HCT116 (cell line): ENCODE measurements at regions of chr12 and their contacts with region 1.

Region 1: DNA sequence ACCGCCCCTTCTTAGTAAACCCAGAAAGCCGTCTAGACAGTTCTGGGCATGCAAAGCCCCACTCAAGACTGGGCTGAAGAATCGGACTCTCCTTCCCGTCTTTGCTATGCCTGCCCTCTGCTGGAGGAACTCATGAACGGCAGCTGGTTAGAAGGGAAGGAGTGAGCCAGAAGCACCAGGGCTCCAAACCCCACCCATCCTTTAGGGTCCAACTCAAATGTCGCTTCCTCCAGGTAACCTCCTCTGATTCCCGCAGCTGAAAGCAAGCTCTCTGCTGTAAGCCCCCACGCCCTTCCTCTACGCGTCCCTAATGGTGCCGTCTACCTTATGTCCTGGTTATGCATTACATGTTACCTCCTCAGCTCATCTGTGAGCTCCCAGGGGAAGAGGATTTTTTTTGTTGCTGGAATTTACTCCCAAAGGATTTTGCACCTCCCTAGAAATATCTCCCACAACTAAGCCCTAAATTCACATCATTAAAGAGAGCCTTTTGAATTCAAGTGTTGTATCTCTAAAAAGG is 59.0 kb upstream of the SCN8A start:
- DNase-seq: peak; percentile 67
- ATAC-seq: peak; percentile 98
- H3K4me3 ChIP-seq: no peak overlapping the region
- H3K27ac ChIP-seq: no peak overlapping the region
- H3K4me1 ChIP-seq: peaks cover 0 to 12% of the 10 kb centered on the region in 2 experiments; a peak in 2 of 4 replicates
- H3K27me3 ChIP-seq: peaks cover 5% of the 10 kb centered on the region; the same call in 1 of the 2 replicates
- CTCF ChIP-seq: peak; percentile 81 to 88 (median 85)
- POLR2A ChIP-seq: no peak
- RAD21 ChIP-seq: peak; percentile 91

Region 2: GRCh38 chr12:51419425-51420208 is 112.4 kb before region 1 on chr12:
- CTCF ChIA-PET with region 1: interaction called, 30 read pairs
- POLR2A ChIA-PET with region 1: no interaction called
- RAD21 ChIA-PET with region 1: interaction called, 4 read pairs
- intact Hi-C with region 1: loop called (anchors 1 kb)
- DNase-seq: no peak
- ATAC-seq: peak; percentile 38; the same call in 1 of the 2 replicates
- H3K4me3 ChIP-seq: no peak overlapping the region
- H3K27ac ChIP-seq: no peak overlapping the region
- H3K4me1 ChIP-seq: peaks cover 0 to 4% of the 10 kb centered on the region in 2 experiments; a peak in 2 of 4 replicates
- H3K27me3 ChIP-seq: no peaks in the 10 kb centered on the region; the same call in 1 of the 2 replicates
- CTCF ChIP-seq: peak in 1 of 3 experiments; percentile 8; a peak in 1 of 6 replicates
- POLR2A ChIP-seq: no peak
- RAD21 ChIP-seq: 0 out of 2 replicates have a peak, but pooled peaks have one; percentile 20

Region 3: DNA sequence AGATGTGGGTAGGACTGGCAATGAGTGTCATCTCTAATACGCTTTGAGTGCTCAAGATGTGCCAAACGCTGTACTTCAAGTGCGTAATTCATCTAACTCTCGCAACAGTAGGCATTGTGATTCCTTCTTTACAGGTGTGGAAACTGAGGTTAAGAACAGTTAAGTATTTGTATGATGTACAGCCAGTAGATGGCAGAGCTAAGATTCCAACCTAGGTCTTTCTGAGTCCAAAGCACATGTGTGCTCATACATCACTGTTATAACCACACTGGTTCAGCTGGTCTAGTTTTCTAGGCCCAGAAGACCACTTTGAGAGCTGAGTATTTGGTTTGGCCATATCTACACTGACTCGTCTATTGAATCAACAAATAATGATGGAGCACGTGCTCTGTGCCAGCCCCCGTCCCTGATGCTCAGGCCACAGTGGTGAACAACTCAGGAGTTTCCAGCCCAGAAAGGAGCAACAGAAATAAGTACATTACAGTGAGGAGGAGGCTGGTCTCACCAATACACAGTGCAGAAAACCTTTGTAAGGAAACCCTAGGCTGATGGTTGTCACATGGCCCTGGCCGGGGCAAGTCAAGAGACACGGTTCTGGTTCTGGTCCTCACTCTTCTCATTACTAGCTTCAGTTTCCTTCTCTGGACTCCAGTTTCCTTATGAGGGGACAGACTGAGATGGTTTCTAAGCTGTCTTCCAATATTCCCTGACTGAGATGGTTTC is 10.3 kb before region 1 on chr12:
- CTCF ChIA-PET with region 1: interaction called, 29 read pairs
- POLR2A ChIA-PET with region 1: no interaction called
- RAD21 ChIA-PET with region 1: no interaction called
- intact Hi-C with region 1: no loop called
- DNase-seq: no peak
- ATAC-seq: peak; percentile 71
- H3K4me3 ChIP-seq: no peak overlapping the region
- H3K27ac ChIP-seq: no peak overlapping the region
- H3K4me1 ChIP-seq: no peaks in the 10 kb centered on the region
- H3K27me3 ChIP-seq: no peaks in the 10 kb centered on the region
- CTCF ChIP-seq: peak; percentile 24 to 39 (median 25); a peak in 4 of 6 replicates
- POLR2A ChIP-seq: no peak
- RAD21 ChIP-seq: peak; percentile 42

Region 4: DNA sequence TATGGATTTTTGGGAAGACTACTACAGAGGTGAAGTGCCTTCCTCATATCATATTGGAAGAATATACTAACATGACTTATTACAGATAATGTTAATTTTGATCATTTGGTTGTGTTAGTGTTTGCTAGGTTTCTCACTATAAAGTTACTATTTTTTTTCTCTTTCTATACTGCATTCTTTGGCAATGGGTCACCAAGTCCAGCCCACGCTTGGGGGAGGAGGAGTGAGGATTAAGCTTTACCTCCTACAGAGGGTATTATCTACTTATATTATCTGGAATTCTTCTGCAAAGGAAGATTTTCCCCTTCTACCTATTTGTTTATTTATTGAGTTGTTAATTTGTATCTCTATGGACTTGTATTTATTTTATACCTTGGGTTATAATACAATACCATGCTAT is 90.5 kb after region 1 on chr12:
- CTCF ChIA-PET with region 1: no interaction called
- POLR2A ChIA-PET with region 1: no interaction called
- RAD21 ChIA-PET with region 1: no interaction called
- intact Hi-C with region 1: no loop called
- DNase-seq: no peak
- ATAC-seq: no peak
- H3K4me3 ChIP-seq: no peak overlapping the region; a peak in 1 of 4 replicates
- H3K27ac ChIP-seq: no peak overlapping the region
- H3K4me1 ChIP-seq: peaks cover 5 to 11% of the 10 kb centered on the region in 2 experiments; a peak in 3 of 4 replicates
- H3K27me3 ChIP-seq: no peaks in the 10 kb centered on the region
- CTCF ChIP-seq: no peak
- POLR2A ChIP-seq: no peak
- RAD21 ChIP-seq: no peak

Region 5: DNA sequence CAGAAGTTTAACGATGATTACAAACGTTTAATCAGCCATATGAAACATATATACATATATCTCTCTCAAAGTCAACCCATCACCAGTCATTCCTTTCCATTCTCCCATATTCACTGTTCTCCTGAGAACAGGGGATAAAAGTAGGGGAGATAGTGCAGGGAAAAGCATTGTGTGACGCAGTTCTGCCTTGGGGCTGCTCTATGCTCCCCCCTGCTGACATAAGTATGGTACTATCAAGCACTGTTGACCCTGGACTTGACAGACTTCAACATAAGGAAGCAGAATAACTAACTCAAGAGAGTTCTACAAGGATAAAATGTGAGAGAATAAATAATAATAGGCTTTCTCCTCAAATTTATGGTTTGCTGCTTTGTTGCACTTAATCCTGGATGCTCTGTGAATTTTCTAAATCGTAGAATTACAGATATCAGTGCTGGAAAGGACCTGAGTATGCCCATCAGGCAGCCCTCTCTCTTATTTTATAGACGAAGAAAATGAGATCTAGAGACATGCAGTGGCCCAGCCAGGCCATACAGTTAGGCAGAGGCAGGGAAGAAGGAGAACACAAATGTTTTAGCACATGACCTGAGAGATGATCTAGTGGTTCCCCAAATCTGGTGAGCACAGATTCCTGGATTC is 146.2 kb after region 1 on chr12:
- CTCF ChIA-PET with region 1: no interaction called
- POLR2A ChIA-PET with region 1: no interaction called
- RAD21 ChIA-PET with region 1: no interaction called
- intact Hi-C with region 1: loop called (anchors 10 kb)
- DNase-seq: peak; percentile 34
- ATAC-seq: peak; percentile 99
- H3K4me3 ChIP-seq: no peak overlapping the region
- H3K27ac ChIP-seq: no peak overlapping the region
- H3K4me1 ChIP-seq: peaks cover 0 to 3% of the 10 kb centered on the region in 2 experiments; a peak in 1 of 4 replicates
- H3K27me3 ChIP-seq: no peaks in the 10 kb centered on the region
- CTCF ChIP-seq: peak; percentile 63 to 90 (median 87); a peak in 5 of 6 replicates
- POLR2A ChIP-seq: no peak
- RAD21 ChIP-seq: peak; percentile 73

Region 6: GRCh38 chr12:51879102-51879501 is 347.1 kb after region 1 on chr12:
- CTCF ChIA-PET with region 1: interaction called, 7 read pairs
- POLR2A ChIA-PET with region 1: no interaction called
- RAD21 ChIA-PET with region 1: no interaction called
- intact Hi-C with region 1: loop called (anchors 5 kb)
- DNase-seq: no peak
- ATAC-seq: no peak
- H3K4me3 ChIP-seq: no peak overlapping the region
- H3K27ac ChIP-seq: no peak overlapping the region
- H3K4me1 ChIP-seq: peaks cover 0 to under 1% of the 10 kb centered on the region in 2 experiments; a peak in 1 of 4 replicates
- H3K27me3 ChIP-seq: no peaks in the 10 kb centered on the region
- CTCF ChIP-seq: no peak
- POLR2A ChIP-seq: no peak
- RAD21 ChIP-seq: no peak

Region 7: GRCh38 chr12:52249051-52249461 is 717.0 kb after region 1 on chr12:
- CTCF ChIA-PET with region 1: no interaction called
- POLR2A ChIA-PET with region 1: no interaction called
- RAD21 ChIA-PET with region 1: no interaction called
- intact Hi-C with region 1: no loop called
- DNase-seq: no peak
- ATAC-seq: no peak
- H3K4me3 ChIP-seq: no peak overlapping the region
- H3K27ac ChIP-seq: no peak overlapping the region; the same call in 1 of the 2 replicates
- H3K4me1 ChIP-seq: peaks cover 49 to 68% of the 10 kb centered on the region in 2 experiments
- H3K27me3 ChIP-seq: no peaks in the 10 kb centered on the region
- CTCF ChIP-seq: no peak
- POLR2A ChIP-seq: no peak
- RAD21 ChIP-seq: no peak